Activated naive CD8-positive, alpha-beta T cell treated with anti-CD3 and anti-CD28 coated beads, Interleukin-2, amount 10 ng/mL, durations not matched to agents 7 days and 5 days (primary cell): ENCODE measurements at regions of chr11 and their contacts with region 1.

Region 1: GRCh38 chr11:108253176-108253575 is 30.3 kb downstream of the ATM start:
- DNase-seq: no peak
- ATAC-seq: no peak
- H3K4me3 Mint-ChIP-seq: no peak overlapping the region
- H3K27ac Mint-ChIP-seq: no peak overlapping the region
- H3K4me1 Mint-ChIP-seq: peaks cover 9% of the 10 kb centered on the region
- H3K27me3 Mint-ChIP-seq: no peaks in the 10 kb centered on the region

Region 2: GRCh38 chr11:108206969-108207682 is 46.0 kb before region 1 on chr11:
- POLR2A ChIA-PET with region 1: no interaction called
- DNase-seq: no peak
- ATAC-seq: no peak
- H3K4me3 Mint-ChIP-seq: no peak overlapping the region
- H3K27ac Mint-ChIP-seq: no peak overlapping the region
- H3K4me1 Mint-ChIP-seq: peaks cover 17% of the 10 kb centered on the region
- H3K27me3 Mint-ChIP-seq: no peaks in the 10 kb centered on the region

Region 3: GRCh38 chr11:108237058-108237481 is 16.1 kb before region 1 on chr11:
- POLR2A ChIA-PET with region 1: interaction called, 10 read pairs
- DNase-seq: no peak
- ATAC-seq: peak; percentile 24
- H3K4me3 Mint-ChIP-seq: peak overlapping the region; percentile 70
- H3K27ac Mint-ChIP-seq: peak overlapping the region; percentile 93
- H3K4me1 Mint-ChIP-seq: peaks cover 68% of the 10 kb centered on the region
- H3K27me3 Mint-ChIP-seq: no peaks in the 10 kb centered on the region

Region 4: DNA sequence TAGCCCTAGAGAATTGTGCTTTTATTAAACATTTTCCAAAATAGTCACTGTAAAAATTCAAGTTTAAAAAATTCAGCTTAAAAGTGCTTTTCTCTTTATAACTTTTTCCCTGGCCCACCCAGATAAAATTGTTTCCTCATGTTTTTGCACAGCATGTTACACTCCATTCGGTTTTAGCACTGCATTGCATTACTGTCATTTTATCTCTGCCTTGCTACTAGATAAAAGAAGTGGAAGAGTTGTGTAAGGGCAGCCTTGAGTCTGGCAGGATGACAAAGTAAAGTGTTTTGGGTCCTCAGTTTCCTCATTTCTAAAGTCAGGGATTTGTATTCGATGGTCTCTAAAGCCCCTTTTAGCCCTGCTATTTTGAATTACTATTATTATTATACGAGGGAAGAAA is 69.5 kb after region 1 on chr11:
- POLR2A ChIA-PET with region 1: no interaction called
- DNase-seq: no peak
- ATAC-seq: no peak
- H3K4me3 Mint-ChIP-seq: no peak overlapping the region
- H3K27ac Mint-ChIP-seq: no peak overlapping the region
- H3K4me1 Mint-ChIP-seq: peaks cover 3% of the 10 kb centered on the region
- H3K27me3 Mint-ChIP-seq: no peaks in the 10 kb centered on the region